AG04449 (cell line): ENCODE measurements at regions of chr16 and their contacts with region 1.

Region 1: GRCh38 chr16:73202161-73202729 is 154.3 kb upstream of the ZFHX3 start:
- DNase-seq: peak; percentile 97
- H3K4me3 ChIP-seq: no peak overlapping the region
- CTCF ChIP-seq: no peak

Region 2: DNA sequence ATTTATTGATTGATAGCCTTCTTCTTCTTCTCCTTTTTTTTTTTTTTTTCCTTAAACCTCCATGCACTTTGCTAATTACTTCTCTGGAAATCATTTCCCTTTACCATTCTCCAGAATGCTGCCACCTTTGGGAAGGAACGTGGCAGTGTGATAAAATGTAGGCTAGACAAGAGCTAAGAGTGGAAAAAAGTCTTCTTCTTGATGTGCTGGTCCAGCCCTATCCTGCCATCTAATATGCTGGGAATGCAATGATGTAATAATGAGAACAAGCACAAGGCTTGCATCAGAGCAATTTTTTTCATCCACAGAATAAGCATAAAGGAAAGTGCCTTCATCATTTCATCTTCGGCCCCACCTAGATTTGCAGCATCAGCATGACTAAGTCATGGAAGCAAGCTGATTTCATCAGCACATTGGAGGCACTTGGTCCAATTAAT is 25.6 kb before region 1 on chr16:
- CTCF ChIA-PET with region 1: interaction called, 15 read pairs
- POLR2A ChIA-PET with region 1: interaction called, 3 read pairs
- DNase-seq: peak; percentile 90
- H3K4me3 ChIP-seq: no peak overlapping the region
- CTCF ChIP-seq: peak; percentile 47

Region 3: DNA sequence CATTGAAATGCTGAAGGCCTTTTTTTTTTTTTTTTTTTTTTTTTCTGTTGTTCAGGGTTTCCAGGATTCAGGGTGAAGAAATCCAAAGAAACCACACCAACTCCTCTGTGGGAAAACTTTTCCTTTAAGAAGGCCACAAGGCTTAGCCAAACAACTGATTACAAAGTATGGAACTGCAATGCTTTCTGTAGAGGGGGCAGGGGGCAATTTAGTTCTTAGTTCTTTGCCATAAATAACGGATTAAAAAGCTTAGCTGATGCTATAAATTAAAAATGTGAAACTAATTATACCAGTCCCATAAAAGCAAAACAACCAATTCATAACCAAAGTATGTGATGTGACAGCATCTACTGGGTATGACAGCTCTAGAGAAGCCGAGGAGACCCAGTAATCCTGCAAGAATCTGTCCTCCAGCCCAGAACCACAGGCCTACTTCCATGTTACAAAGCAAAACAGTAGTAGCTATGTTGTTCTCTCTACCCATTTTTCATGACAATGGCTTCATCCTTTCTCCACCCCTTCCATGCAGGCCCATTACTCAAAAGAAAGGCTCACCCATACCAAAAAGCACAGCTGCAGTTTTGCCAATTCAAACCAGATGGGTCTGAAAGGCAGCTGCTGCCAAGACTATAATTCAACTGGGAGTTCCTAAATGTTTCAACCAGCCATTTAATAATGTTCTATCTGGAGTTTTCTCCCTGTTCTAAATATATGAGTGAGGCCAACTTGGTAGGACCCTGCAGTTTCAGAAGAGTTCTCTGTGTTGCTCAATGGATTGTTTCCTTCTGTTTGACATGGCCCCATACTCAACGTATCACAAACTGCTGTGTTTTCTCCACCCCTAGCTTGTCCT is 12.8 kb after region 1 on chr16:
- CTCF ChIA-PET with region 1: interaction called, 8 read pairs
- POLR2A ChIA-PET with region 1: interaction called, 36 read pairs
- DNase-seq: peak; percentile 98
- H3K4me3 ChIP-seq: no peak overlapping the region
- CTCF ChIP-seq: no peak